Ascending aorta (tissue), 2 donors: ENCODE measurements at regions of chr3 and their contacts with region 1.

Region 1: GRCh38 chr3:107522510-107523288 is at the start of gene BBX:
- DNase-seq: peak; percentile 85 to 98
- H3K4me3 ChIP-seq: peak within 1 kb of the TSS; percentile 94 to 95
- H3K27ac ChIP-seq: peak within 1 kb of the TSS; percentile 96 to 98
- H3K4me1 ChIP-seq: peaks cover 0 to 11% of the 10 kb centered on the region in 2 donors
- H3K27me3 ChIP-seq: no peaks in the 10 kb centered on the region
- CTCF ChIP-seq: no peak
- total RNA-seq, gene BBX: 18.0 TPM

Region 2: GRCh38 chr3:107206141-107206540 is 316.6 kb before region 1 on chr3:
- intact Hi-C with region 1: loop called (anchors 5 kb)
- DNase-seq: no peak
- H3K4me3 ChIP-seq: no peak overlapping the region
- H3K27ac ChIP-seq: peak overlapping the region in 1 of 2 donors; percentile 69
- H3K4me1 ChIP-seq: peaks cover 6 to 29% of the 10 kb centered on the region in 2 donors
- H3K27me3 ChIP-seq: no peaks in the 10 kb centered on the region
- CTCF ChIP-seq: peak in 2 of 3 experiments; percentile 31 to 40

Region 3: GRCh38 chr3:107429320-107430181 is 93.1 kb before region 1 on chr3:
- intact Hi-C with region 1: loop called (anchors 1 kb)
- DNase-seq: peak; percentile 13 to 86
- H3K4me3 ChIP-seq: peak overlapping the region; percentile 84 to 85
- H3K27ac ChIP-seq: peak overlapping the region; percentile 99 to 100
- H3K4me1 ChIP-seq: peaks cover 0 to 9% of the 10 kb centered on the region in 2 donors
- H3K27me3 ChIP-seq: no peaks in the 10 kb centered on the region
- CTCF ChIP-seq: peak; percentile 78 to 85 (median 83)

Region 4: GRCh38 chr3:108589146-108589997 is 1066.7 kb after region 1 on chr3 and contains the starts of genes CIP2A and DZIP3:
- intact Hi-C with region 1: loop called (anchors 5 kb)
- DNase-seq: peak; percentile 20 to 88
- H3K4me3 ChIP-seq: peak within 1 kb of the TSS; percentile 70 to 71
- H3K27ac ChIP-seq: peak within 1 kb of the TSS; percentile 93
- H3K4me1 ChIP-seq: peaks cover 0 to 2% of the 10 kb centered on the region in 2 donors
- H3K27me3 ChIP-seq: no peaks in the 10 kb centered on the region
- CTCF ChIP-seq: no peak
- total RNA-seq, gene CIP2A: not detected
- total RNA-seq, gene DZIP3: 7.0 TPM

Region 5: DNA sequence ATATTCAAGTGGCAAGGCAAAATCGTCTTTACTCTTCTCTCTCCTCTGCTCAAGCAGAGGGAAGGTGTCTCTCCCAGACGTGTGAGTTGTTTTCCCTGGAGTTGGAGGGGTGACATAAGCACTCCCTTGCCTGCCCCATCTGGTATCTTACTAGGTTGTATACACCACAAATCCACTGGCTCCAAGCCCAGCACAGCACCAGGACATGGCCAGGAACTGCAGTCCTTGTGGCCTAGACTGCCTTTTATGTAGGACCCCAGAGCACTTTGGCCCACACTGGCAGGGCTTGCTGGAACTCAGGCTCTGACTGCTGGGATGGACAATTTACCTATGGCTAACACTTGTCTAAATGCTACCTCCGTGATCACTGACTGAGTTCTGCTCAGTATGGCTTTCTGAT is 1100.8 kb after region 1 on chr3:
- intact Hi-C with region 1: no loop called
- DNase-seq: no peak
- H3K4me3 ChIP-seq: no peak overlapping the region
- H3K27ac ChIP-seq: no peak overlapping the region
- H3K4me1 ChIP-seq: no peaks in the 10 kb centered on the region
- H3K27me3 ChIP-seq: no peaks in the 10 kb centered on the region
- CTCF ChIP-seq: no peak